ENCODE measurements at regions of chr1 and their contacts with region 1.

Region 1: GRCh38 chr1:119743781-119744597 is 24.7 kb downstream of the HMGCS2 start:
- DNase-seq: no peak
- H3K4me3 ChIP-seq: no peak overlapping the region
- H3K27ac ChIP-seq: peak overlapping the region in 3 of 4 donors; percentile 66 to 80 (median 79)
- H3K4me1 ChIP-seq: peaks cover 11 to 52% (median 40%) of the 10 kb centered on the region in 4 donors
- H3K27me3 ChIP-seq: no peaks in the 10 kb centered on the region
- CTCF ChIP-seq: peak; percentile 73 to 85 (median 80)
- EP300 ChIP-seq: no peak
- POLR2A ChIP-seq: no peak

Region 2: DNA sequence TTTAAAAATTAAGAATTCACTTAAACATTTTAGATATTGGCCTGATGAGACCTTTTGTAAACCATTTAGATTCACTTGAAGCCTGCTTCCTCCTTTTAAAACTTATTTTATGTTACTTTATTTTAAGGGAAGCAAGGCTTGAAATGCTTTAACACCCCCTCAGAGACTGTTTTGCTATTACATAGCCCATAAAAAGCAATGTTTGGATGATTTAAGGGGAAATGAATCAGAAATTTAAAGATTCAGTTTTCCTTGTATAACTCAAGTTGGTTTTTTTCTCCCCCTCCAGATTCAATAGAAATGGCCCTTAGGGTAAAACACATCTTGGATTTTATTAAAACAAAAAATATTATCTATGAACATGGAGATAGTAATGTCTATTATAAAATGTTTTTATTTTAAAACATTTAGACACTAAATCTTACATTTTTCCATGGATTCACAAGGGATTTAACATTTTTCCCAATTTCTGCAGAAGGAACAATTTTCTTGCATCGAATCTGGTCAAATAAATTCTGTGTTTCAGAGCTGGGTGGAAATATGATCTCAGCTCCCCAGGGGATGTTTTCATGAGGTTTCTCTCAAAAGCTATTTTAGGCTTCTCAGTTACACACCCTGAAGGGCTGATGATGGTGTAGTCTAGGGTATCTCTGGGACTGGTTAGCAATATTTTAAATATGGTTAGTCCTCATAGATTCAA is 534.2 kb before region 1 on chr1:
- intact Hi-C with region 1: no loop called
- DNase-seq: no peak
- H3K4me3 ChIP-seq: no peak overlapping the region
- H3K27ac ChIP-seq: no peak overlapping the region
- H3K4me1 ChIP-seq: no peaks in the 10 kb centered on the region
- H3K27me3 ChIP-seq: no peaks in the 10 kb centered on the region
- CTCF ChIP-seq: no peak
- EP300 ChIP-seq: no peak
- POLR2A ChIP-seq: no peak

Region 3: DNA sequence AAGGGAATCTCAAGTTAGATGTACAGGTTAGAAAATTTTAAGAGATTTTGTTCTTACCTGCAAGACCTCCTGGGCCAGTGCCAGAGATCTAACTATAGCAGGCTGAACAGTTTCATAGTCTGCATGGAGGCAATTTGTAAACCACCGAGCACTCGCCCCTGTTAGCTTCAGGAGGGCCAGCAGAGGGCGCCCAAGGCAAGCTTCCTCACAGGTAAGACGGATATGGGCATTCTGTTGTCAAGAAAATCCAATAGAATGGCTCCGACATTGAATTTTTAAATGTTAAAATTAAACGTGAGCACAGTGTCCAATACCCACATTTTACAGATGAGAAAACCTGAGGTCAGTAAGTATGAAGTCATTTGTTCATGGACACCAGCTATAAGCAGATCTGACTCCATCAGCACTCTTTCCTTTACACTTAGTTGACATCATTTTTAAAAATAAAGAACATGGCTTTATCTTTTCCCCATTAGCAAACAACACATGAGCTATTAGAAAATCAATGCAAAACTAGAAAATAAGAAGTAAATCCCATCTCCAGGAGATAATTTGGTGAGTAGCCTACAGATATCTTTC is 65.1 kb after region 1 on chr1:
- intact Hi-C with region 1: loop called (anchors 2 kb)
- DNase-seq: no peak
- H3K4me3 ChIP-seq: no peak overlapping the region
- H3K27ac ChIP-seq: no peak overlapping the region
- H3K4me1 ChIP-seq: peaks cover 0 to 8% (median 0%) of the 10 kb centered on the region in 4 donors
- H3K27me3 ChIP-seq: no peaks in the 10 kb centered on the region
- CTCF ChIP-seq: peak; percentile 79 to 92 (median 85)
- EP300 ChIP-seq: no peak
- POLR2A ChIP-seq: no peak

Region 4: GRCh38 chr1:119870917-119871596 is 127.1 kb after region 1 on chr1:
- intact Hi-C with region 1: loop called (anchors 5 kb)
- DNase-seq: no peak
- H3K4me3 ChIP-seq: peak overlapping the region in 1 of 4 donors; percentile 21
- H3K27ac ChIP-seq: no peak overlapping the region
- H3K4me1 ChIP-seq: peaks cover 5 to 32% (median 28%) of the 10 kb centered on the region in 4 donors
- H3K27me3 ChIP-seq: no peaks in the 10 kb centered on the region
- CTCF ChIP-seq: peak; percentile 85 to 95 (median 88)
- EP300 ChIP-seq: no peak
- POLR2A ChIP-seq: no peak